ENCODE measurements at regions of chr6 and their contacts with region 1.

Region 1: DNA sequence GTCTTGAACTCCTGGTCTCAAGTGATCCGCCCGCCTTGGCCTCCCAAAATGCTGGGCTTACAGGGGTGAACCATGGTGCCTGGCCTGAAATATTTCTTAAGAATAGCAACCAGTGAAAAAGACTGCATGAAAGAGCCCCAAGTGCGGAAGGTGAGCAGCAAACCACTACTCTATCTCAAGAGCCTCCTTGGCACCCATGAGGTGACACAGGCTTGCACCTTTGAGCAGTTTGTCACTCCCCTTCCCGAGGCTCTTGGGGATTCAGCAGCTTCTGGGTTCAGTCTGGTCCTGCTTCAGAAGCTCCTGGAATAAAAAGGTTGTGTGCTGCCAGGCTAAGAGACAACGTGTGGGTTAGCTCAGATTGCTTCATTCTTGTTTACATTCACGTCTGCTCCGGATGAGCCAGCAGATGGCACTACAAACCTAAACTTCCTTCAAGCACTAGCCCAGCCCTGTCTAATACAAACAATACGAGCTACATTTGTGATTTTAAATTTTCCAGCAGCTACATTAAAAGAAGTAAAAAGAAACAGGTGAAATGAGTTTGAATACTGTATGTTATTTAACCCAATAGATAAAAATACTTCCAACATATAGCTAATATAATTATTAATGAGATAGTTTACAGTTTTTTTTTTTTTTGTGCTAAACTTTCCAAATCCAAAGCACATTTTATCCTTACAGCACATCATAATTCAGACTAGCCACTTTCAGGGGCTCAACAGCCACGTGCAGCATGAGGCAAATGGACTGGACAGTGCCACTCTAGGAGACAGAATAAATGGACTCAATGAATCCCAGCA is 46.2 kb downstream of the GJA10 start:
- DNase-seq: peak; percentile 78
- ATAC-seq: peak; percentile 83
- H3K4me3 ChIP-seq: no peak overlapping the region
- H3K27ac ChIP-seq: no peak overlapping the region
- H3K4me1 ChIP-seq: peaks cover 13% of the 10 kb centered on the region
- H3K27me3 ChIP-seq: no peaks in the 10 kb centered on the region
- CTCF ChIP-seq: peak; percentile 75

Region 2: DNA sequence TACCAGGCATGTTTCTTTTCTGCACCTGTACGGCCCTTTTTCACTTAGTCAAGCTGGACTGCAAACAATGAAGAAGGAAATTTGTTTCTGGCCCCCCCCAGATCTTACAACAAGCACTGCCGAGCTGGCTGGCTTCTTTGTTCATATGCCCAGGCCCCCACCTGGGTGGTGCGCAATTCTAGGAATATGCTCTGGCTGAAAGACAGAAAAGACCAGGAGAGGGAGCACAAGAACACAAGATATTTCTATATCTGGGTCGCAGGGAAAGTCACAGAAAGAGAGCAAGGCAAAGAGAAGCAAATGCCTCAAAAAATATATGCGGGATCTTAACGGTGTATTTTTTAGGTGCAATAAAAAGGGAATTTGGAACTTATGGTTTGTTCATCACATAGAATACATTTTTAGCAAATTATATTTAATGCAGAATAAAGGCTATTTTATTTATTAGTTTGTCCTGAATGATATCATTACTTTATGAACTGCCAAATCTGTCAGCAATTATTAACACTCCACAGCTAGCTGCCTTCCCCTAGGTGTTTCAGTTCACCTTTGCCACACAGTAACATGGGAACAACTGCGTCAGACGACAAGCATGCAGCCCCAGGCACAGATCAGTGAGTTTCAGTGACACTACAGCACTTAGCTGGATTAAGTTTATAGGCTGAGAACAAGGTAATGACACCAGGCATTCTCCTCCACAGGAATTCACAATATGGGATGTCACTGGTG is 30.3 kb after region 1 on chr6:
- CTCF ChIA-PET with region 1: interaction called, 8 read pairs
- POLR2A ChIA-PET with region 1: no interaction called
- intact Hi-C with region 1: loop called (anchors 1 kb)
- DNase-seq: peak; percentile 73
- ATAC-seq: peak; percentile 90
- H3K4me3 ChIP-seq: no peak overlapping the region
- H3K27ac ChIP-seq: peak overlapping the region; percentile 25
- H3K4me1 ChIP-seq: peaks cover 14% of the 10 kb centered on the region
- H3K27me3 ChIP-seq: no peaks in the 10 kb centered on the region
- CTCF ChIP-seq: peak; percentile 70

Region 3: GRCh38 chr6:90179190-90180169 is 239.1 kb after region 1 on chr6:
- CTCF ChIA-PET with region 1: interaction called, 4 read pairs
- POLR2A ChIA-PET with region 1: no interaction called
- intact Hi-C with region 1: loop called (anchors 10 kb)
- DNase-seq: peak; percentile 35
- ATAC-seq: no peak
- H3K4me3 ChIP-seq: no peak overlapping the region
- H3K27ac ChIP-seq: no peak overlapping the region
- H3K4me1 ChIP-seq: no peaks in the 10 kb centered on the region
- H3K27me3 ChIP-seq: no peaks in the 10 kb centered on the region
- CTCF ChIP-seq: peak; percentile 71

Region 4: DNA sequence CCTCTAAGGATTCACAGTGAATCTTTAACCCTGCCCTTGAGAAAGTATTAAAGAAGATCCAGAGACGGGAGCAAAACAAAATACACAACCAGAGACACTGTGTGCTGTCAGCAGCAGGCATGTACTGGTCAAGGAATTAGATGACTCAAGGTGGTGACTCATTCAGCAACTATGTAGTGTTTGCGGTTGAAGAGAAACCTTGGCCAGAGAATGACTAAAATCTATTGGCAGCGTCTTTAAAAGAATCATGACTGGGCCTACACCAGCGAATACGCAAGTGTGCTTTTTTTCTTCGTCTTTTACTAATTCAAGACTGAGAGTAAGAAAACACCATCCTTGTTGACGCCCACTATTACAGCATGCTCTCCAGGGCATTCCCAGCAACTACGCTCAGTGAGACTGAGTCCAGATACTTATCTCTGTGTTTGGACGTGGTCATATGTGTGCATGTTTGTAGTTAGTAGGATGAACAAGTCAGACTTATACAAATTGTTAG is 428.6 kb after region 1 on chr6:
- CTCF ChIA-PET with region 1: interaction called, 4 read pairs
- POLR2A ChIA-PET with region 1: no interaction called
- intact Hi-C with region 1: loop called (anchors 5 kb)
- DNase-seq: peak; percentile 98
- ATAC-seq: peak; percentile 98
- H3K4me3 ChIP-seq: peak overlapping the region; percentile 45; the same call in 1 of the 2 replicates
- H3K27ac ChIP-seq: peak overlapping the region; percentile 84
- H3K4me1 ChIP-seq: peaks cover 48% of the 10 kb centered on the region
- H3K27me3 ChIP-seq: no peaks in the 10 kb centered on the region
- CTCF ChIP-seq: no peak

Measured in PC-3 (cell line).